Esophagus muscularis mucosa (tissue), 4 donors: ENCODE measurements at regions of chr2 and their contacts with region 1.

Region 1: GRCh38 chr2:9813312-9814133 is 29.8 kb upstream of the TAF1B start:
- DNase-seq: no peak
- H3K4me3 ChIP-seq: peak overlapping the region; percentile 1 to 38 (median 12)
- H3K27ac ChIP-seq: no peak overlapping the region
- H3K4me1 ChIP-seq: peaks cover 10 to 14% (median 12%) of the 10 kb centered on the region in 4 donors
- H3K27me3 ChIP-seq: peaks cover 0 to 6% (median 0%) of the 10 kb centered on the region in 4 donors
- CTCF ChIP-seq: peak; percentile 77 to 91 (median 88)
- EP300 ChIP-seq: no peak
- POLR2A ChIP-seq: no peak

Region 2: GRCh38 chr2:9191041-9191481 is 622.5 kb before region 1 on chr2:
- intact Hi-C with region 1: no loop called
- DNase-seq: no peak
- H3K4me3 ChIP-seq: no peak overlapping the region
- H3K27ac ChIP-seq: peak overlapping the region; percentile 50 to 83 (median 74)
- H3K4me1 ChIP-seq: peaks cover 23 to 44% (median 37%) of the 10 kb centered on the region in 4 donors
- H3K27me3 ChIP-seq: no peaks in the 10 kb centered on the region
- CTCF ChIP-seq: no peak
- EP300 ChIP-seq: no peak
- POLR2A ChIP-seq: no peak

Region 3: GRCh38 chr2:9681427-9681817 is 132.1 kb before region 1 on chr2:
- intact Hi-C with region 1: no loop called
- DNase-seq: no peak
- H3K4me3 ChIP-seq: no peak overlapping the region
- H3K27ac ChIP-seq: no peak overlapping the region
- H3K4me1 ChIP-seq: no peaks in the 10 kb centered on the region
- H3K27me3 ChIP-seq: no peaks in the 10 kb centered on the region
- CTCF ChIP-seq: no peak
- EP300 ChIP-seq: no peak
- POLR2A ChIP-seq: no peak

Region 4: GRCh38 chr2:9941196-9941995 is 127.9 kb after region 1 on chr2:
- intact Hi-C with region 1: loop called (anchors 10 kb)
- DNase-seq: no peak
- H3K4me3 ChIP-seq: no peak overlapping the region
- H3K27ac ChIP-seq: no peak overlapping the region
- H3K4me1 ChIP-seq: no peaks in the 10 kb centered on the region
- H3K27me3 ChIP-seq: peaks cover 0 to 31% (median 0%) of the 10 kb centered on the region in 4 donors
- CTCF ChIP-seq: no peak
- EP300 ChIP-seq: no peak
- POLR2A ChIP-seq: no peak

Region 5: DNA sequence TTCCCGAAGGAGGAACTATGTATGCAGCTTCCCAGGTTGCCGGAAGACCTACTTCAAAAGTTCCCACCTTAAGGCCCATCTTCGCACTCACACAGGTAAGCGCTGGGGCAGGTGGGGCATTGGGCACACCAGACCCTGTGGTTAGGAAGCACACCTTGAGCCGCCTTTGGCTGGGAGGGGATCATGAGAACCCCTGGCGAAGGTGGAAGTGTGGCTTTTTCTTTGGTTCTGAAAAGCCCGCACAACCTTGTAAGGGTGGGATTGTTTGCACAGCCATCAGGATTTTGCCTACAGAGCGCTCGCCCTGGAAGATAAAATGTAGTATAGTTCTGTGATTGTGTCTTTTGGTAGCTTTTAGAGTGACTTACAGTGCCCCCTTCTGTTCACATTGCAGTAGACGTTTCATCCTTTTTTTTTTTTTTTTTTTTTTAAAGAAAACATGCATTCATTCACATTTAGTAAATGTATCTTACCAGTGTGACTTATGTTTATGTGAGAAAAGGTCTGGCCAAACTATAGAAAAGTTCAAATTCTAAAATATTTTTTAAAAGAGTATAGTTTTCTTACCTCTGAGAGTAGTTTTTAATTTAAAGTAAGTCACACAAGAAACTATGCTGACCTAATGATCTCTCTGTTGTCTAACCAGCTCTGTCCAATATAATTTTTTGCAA is 235.1 kb after region 1 on chr2:
- intact Hi-C with region 1: loop called (anchors 2 kb)
- DNase-seq: no peak
- H3K4me3 ChIP-seq: no peak overlapping the region
- H3K27ac ChIP-seq: peak overlapping the region in 3 of 4 donors; percentile 96 to 99 (median 98)
- H3K4me1 ChIP-seq: peaks cover 66 to 77% (median 72%) of the 10 kb centered on the region in 4 donors
- H3K27me3 ChIP-seq: no peaks in the 10 kb centered on the region
- CTCF ChIP-seq: peak; percentile 58 to 68 (median 66)
- EP300 ChIP-seq: no peak
- POLR2A ChIP-seq: no peak

Region 6: DNA sequence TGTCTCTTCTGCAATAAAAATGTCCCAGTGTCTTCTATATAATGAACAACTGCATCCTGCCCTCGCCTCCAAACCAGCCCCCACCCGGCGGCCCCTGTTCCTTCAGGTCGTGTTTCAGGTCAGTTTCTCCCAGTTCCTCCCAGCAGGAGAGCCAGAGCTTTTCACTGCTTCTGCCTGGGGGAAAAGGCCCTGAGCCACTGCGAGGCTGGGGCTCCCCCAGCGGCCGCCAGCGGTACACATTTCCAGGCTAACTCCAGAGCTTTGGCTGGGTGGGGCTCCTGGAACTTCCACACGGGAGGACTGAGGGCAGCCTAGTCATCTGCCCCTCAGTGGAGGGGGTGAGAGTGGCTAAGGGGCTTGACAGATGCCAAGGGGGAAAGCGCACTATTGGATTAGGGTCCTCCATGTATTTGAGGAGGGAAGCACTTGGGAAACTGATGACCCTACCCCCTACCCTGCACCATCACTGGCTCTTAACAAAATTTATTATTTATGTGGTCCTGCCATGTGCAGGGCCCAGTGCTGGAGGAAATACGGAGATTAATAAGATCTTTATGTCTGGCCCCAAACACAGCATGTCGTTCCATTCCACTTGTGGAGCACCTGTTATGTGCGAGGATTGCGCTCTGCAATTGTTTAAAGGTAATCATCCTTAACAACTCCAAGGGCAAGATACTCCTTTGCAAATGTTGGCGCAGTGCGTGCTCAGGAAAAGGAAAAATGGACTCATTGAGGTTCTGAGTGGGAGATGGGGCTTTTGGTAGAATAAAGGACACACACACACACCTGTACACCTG is 284.0 kb after region 1 on chr2:
- intact Hi-C with region 1: loop called (anchors 10 kb)
- DNase-seq: no peak
- H3K4me3 ChIP-seq: no peak overlapping the region
- H3K27ac ChIP-seq: no peak overlapping the region
- H3K4me1 ChIP-seq: peaks cover 0 to 13% (median 10%) of the 10 kb centered on the region in 4 donors
- H3K27me3 ChIP-seq: peaks cover 0 to 18% (median 0%) of the 10 kb centered on the region in 4 donors
- CTCF ChIP-seq: peak in 2 of 3 experiments; percentile 86 to 90
- EP300 ChIP-seq: no peak
- POLR2A ChIP-seq: no peak